ENCODE measurements at regions of chr11 and their contacts with region 1.

Region 1: GRCh38 chr11:56642339-56642738 is at the start of gene OR5AP2:
- DNase-seq: no peak
- ATAC-seq: no peak
- H3K4me3 ChIP-seq: no peak within 1 kb of the TSS
- H3K4me3 Mint-ChIP-seq: no peak within 1 kb of the TSS
- H3K27ac ChIP-seq: no peak within 1 kb of the TSS
- H3K27ac Mint-ChIP-seq: no peak within 1 kb of the TSS
- H3K4me1 ChIP-seq: no peaks in the 10 kb centered on the region
- H3K4me1 Mint-ChIP-seq: no peaks in the 10 kb centered on the region
- H3K27me3 ChIP-seq: no peaks in the 10 kb centered on the region
- H3K27me3 Mint-ChIP-seq: no peaks in the 10 kb centered on the region
- CTCF ChIP-seq: no peak
- total RNA-seq, gene OR5AP2: not detected

Region 2: GRCh38 chr11:56089697-56090096 is 552.6 kb before region 1 on chr11:
- CTCF ChIA-PET with region 1: no interaction called
- POLR2A ChIA-PET with region 1: no interaction called
- intact Hi-C with region 1: loop called in 1 of 2 experiments (anchors 5 kb)
- DNase-seq: no peak
- ATAC-seq: no peak
- H3K4me3 ChIP-seq: no peak overlapping the region
- H3K4me3 Mint-ChIP-seq: no peak overlapping the region
- H3K27ac ChIP-seq: no peak overlapping the region
- H3K27ac Mint-ChIP-seq: no peak overlapping the region
- H3K4me1 ChIP-seq: no peaks in the 10 kb centered on the region
- H3K4me1 Mint-ChIP-seq: no peaks in the 10 kb centered on the region
- H3K27me3 ChIP-seq: no peaks in the 10 kb centered on the region
- H3K27me3 Mint-ChIP-seq: no peaks in the 10 kb centered on the region
- CTCF ChIP-seq: no peak